ENCODE measurements at regions of chr20 and their contacts with region 1.

Region 1: DNA sequence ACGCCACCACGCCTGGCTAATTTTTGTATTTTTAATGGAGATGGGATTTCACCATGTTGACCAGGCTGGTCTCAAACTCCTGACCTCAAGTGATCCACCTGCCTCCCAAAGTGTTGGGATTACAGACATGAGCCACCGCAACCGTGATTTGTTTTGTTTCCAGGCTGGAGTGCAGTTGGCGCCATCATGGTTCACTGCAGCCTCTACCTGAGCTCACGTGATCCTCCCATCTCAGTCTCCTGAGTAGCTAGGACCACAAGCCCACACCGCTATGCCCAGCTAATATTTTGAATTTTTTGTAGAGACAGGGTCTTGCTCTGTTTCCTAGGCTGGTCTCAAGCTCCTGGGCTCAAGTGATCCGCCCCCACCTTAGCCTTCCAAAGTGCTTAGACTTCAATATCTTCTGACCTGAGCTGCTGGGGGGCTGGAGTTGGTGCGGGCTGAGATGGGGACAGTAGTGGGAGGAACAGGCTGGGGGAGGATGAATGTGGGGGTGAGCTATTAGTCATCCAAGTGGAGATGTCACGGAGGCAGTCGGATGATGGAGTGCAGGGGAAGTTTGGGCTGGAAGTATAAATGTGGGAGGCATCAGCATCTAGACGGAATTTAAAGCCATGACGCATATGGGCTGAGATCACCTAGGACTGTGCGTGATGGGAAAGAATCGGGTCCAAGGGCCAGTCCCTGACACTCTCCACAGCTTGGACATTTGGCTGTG is 23.1 kb upstream of the ZMYND8 start:
- DNase-seq: no peak
- ATAC-seq: no peak
- H3K4me3 ChIP-seq: no peak overlapping the region
- H3K4me3 Mint-ChIP-seq: no peak overlapping the region
- H3K27ac ChIP-seq: no peak overlapping the region
- H3K27ac Mint-ChIP-seq: no peak overlapping the region
- H3K4me1 ChIP-seq: peaks cover 7 to 10% of the 10 kb centered on the region in 2 donors
- H3K4me1 Mint-ChIP-seq: peaks cover 10% of the 10 kb centered on the region
- H3K27me3 ChIP-seq: no peaks in the 10 kb centered on the region
- H3K27me3 Mint-ChIP-seq: no peaks in the 10 kb centered on the region
- CTCF ChIP-seq: no peak

Region 2: DNA sequence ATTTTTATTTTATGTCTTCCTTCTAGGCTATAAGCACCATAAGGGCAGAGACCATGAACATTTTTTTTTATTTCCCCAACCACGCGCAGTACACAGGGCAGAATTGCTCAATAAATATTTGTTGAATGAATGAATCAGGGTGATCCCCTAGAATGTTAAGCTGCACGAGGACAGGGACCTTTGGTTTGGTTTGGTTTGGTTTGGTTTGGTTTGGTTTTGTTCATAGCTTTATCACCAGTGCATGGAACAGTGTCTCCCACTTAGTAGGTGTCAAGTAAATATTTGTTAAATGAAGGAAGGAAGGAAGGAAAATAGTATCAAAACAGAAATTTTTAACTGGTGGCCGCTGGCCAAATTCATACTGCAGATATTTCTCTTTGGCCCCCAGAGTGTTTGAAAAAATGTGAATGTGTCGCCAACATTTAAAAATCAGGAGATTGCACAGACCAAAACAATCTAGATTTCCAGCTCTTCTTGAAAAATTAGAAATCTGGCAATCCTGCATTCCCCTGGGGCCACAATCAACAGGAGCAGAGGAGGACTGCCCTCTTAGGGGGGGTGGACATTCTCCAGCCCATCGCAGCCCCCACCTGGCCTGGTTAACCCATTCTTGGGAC is 279.7 kb before region 1 on chr20:
- CTCF ChIA-PET with region 1: no interaction called
- POLR2A ChIA-PET with region 1: no interaction called
- intact Hi-C with region 1: no loop called
- DNase-seq: no peak
- ATAC-seq: no peak
- H3K4me3 ChIP-seq: no peak overlapping the region
- H3K4me3 Mint-ChIP-seq: no peak overlapping the region
- H3K27ac ChIP-seq: no peak overlapping the region
- H3K27ac Mint-ChIP-seq: no peak overlapping the region
- H3K4me1 ChIP-seq: no peaks in the 10 kb centered on the region
- H3K4me1 Mint-ChIP-seq: no peaks in the 10 kb centered on the region
- H3K27me3 ChIP-seq: peaks cover 0 to 15% (median 0%) of the 10 kb centered on the region in 4 experiments
- H3K27me3 Mint-ChIP-seq: peaks cover 29% of the 10 kb centered on the region
- CTCF ChIP-seq: no peak

Region 3: GRCh38 chr20:47173596-47174216 is 205.9 kb before region 1 on chr20:
- CTCF ChIA-PET with region 1: no interaction called
- POLR2A ChIA-PET with region 1: no interaction called
- intact Hi-C with region 1: no loop called
- DNase-seq: no peak
- ATAC-seq: no peak
- H3K4me3 ChIP-seq: no peak overlapping the region
- H3K4me3 Mint-ChIP-seq: no peak overlapping the region
- H3K27ac ChIP-seq: no peak overlapping the region
- H3K27ac Mint-ChIP-seq: no peak overlapping the region
- H3K4me1 ChIP-seq: no peaks in the 10 kb centered on the region
- H3K4me1 Mint-ChIP-seq: no peaks in the 10 kb centered on the region
- H3K27me3 ChIP-seq: peaks cover 0 to 5% (median 3%) of the 10 kb centered on the region in 4 experiments
- H3K27me3 Mint-ChIP-seq: peaks cover 19% of the 10 kb centered on the region
- CTCF ChIP-seq: no peak

Region 4: DNA sequence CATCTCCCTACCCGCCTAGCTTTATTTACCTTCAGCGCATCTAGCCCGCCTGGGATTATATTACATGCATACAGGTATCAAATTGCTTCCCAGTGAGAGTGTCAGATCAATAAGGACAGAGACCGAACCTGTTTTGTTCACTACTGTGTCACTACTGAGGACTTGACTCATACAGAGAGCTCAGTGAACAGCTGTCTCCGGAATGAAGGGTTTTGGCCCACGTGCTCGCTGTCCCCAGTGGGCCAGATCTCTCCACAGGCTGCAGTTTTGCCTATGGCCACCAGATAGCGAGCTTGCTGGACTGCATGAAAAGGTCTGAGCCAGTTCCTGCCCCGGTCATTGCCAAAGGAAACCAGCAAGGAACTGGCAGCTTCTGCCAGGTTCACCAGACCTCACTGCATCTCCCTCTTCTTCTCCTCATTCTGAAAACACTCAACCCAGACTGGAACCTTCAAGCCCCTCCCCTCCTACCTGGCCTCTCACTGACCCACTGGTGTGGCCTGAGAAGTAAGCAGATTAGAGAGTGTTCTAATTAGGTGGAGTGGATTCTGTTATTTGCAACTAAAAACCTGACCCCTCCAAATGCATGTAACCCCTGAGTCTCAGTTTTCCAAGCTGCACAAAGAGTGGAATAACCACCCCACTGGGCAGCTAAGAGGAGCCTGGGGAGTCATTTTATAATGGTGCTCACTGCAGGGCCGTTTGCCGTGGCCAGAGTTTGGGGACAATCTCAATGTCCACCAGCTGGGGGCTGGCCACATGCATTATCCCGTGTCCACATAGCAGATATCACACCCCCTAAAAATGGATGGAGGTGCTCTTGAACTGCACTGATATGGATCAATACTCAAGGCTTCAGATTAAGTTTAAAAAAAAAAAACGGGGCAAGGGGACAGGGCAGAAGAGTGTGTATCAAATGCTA is 173.8 kb before region 1 on chr20:
- CTCF ChIA-PET with region 1: interaction called, 11 read pairs
- POLR2A ChIA-PET with region 1: no interaction called
- intact Hi-C with region 1: no loop called
- DNase-seq: no peak
- ATAC-seq: peak; percentile 68
- H3K4me3 ChIP-seq: no peak overlapping the region
- H3K4me3 Mint-ChIP-seq: no peak overlapping the region
- H3K27ac ChIP-seq: no peak overlapping the region
- H3K27ac Mint-ChIP-seq: no peak overlapping the region
- H3K4me1 ChIP-seq: no peaks in the 10 kb centered on the region
- H3K4me1 Mint-ChIP-seq: peaks cover 5% of the 10 kb centered on the region
- H3K27me3 ChIP-seq: no peaks in the 10 kb centered on the region
- H3K27me3 Mint-ChIP-seq: no peaks in the 10 kb centered on the region
- CTCF ChIP-seq: no peak

Region 5: GRCh38 chr20:47296950-47297349 is 82.6 kb before region 1 on chr20:
- CTCF ChIA-PET with region 1: interaction called, 46 read pairs
- POLR2A ChIA-PET with region 1: no interaction called
- intact Hi-C with region 1: loop called (anchors 1 kb)
- DNase-seq: peak; percentile 24
- ATAC-seq: peak; percentile 31
- H3K4me3 ChIP-seq: no peak overlapping the region
- H3K4me3 Mint-ChIP-seq: no peak overlapping the region
- H3K27ac ChIP-seq: no peak overlapping the region
- H3K27ac Mint-ChIP-seq: no peak overlapping the region
- H3K4me1 ChIP-seq: no peaks in the 10 kb centered on the region
- H3K4me1 Mint-ChIP-seq: no peaks in the 10 kb centered on the region
- H3K27me3 ChIP-seq: no peaks in the 10 kb centered on the region
- H3K27me3 Mint-ChIP-seq: no peaks in the 10 kb centered on the region
- CTCF ChIP-seq: peak; percentile 30

Region 6: DNA sequence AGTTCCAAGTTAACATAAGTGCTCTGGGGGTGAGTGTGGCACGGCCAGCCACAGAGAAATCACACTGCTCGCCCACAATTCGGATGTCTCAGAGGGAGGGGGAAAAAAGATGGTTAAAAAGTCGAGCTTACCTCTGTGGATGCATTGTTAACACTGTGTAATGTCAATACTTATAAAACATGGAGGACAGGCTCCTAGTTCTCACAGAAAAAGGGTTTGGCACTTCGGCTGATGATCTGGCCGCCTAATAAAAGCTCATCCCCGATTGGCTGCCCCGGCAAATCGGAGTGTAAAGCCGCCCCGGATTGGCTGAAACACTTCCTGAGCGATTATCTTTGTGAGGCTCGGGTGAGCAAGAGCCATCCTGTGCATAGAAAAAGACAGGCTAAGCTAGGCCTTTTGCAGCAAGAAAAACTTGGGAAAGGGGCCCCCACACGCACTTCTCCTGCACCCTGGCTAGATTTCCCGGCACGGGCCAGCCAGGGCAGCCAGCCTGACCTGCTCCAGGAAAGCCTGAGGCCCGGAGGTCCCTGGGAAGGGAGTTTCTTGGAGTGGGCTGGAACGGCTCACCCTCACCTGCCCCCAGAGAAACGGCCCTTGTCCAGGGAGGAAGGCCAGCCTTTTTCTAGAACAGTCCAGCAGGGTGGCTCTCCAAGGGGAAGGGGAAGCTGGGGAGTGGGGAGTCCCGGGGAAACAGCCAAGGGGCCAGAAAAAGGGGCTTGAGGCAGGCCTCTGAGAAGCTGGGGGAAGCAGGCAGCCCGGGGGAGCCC is 22.9 kb before region 1 on chr20 and contains the start of gene ZMYND8:
- CTCF ChIA-PET with region 1: interaction called, 43 read pairs
- POLR2A ChIA-PET with region 1: interaction called, 4 read pairs
- intact Hi-C with region 1: loop called (anchors 2 kb)
- DNase-seq: peak; percentile 98
- ATAC-seq: peak; percentile 81
- H3K4me3 ChIP-seq: peak within 1 kb of the TSS; percentile 42 to 68 (median 56)
- H3K4me3 Mint-ChIP-seq: peak within 1 kb of the TSS; percentile 92
- H3K27ac ChIP-seq: peak within 1 kb of the TSS; percentile 90
- H3K27ac Mint-ChIP-seq: peak within 1 kb of the TSS; percentile 99
- H3K4me1 ChIP-seq: peaks cover 89 to 97% of the 10 kb centered on the region in 2 donors
- H3K4me1 Mint-ChIP-seq: peaks cover 57% of the 10 kb centered on the region
- H3K27me3 ChIP-seq: no peaks in the 10 kb centered on the region
- H3K27me3 Mint-ChIP-seq: no peaks in the 10 kb centered on the region
- CTCF ChIP-seq: no peak
- total RNA-seq, gene ZMYND8: 67.2 and 71.6 TPM in 2 replicates

Region 7: GRCh38 chr20:47428164-47428563 is 48.6 kb after region 1 on chr20:
- CTCF ChIA-PET with region 1: interaction called, 10 read pairs
- POLR2A ChIA-PET with region 1: no interaction called
- intact Hi-C with region 1: no loop called
- DNase-seq: no peak
- ATAC-seq: no peak
- H3K4me3 ChIP-seq: no peak overlapping the region
- H3K4me3 Mint-ChIP-seq: no peak overlapping the region
- H3K27ac ChIP-seq: no peak overlapping the region
- H3K27ac Mint-ChIP-seq: peak overlapping the region; percentile 62
- H3K4me1 ChIP-seq: peaks cover 17 to 19% of the 10 kb centered on the region in 2 donors
- H3K4me1 Mint-ChIP-seq: peaks cover 19% of the 10 kb centered on the region
- H3K27me3 ChIP-seq: no peaks in the 10 kb centered on the region
- H3K27me3 Mint-ChIP-seq: no peaks in the 10 kb centered on the region
- CTCF ChIP-seq: no peak

Region 8: DNA sequence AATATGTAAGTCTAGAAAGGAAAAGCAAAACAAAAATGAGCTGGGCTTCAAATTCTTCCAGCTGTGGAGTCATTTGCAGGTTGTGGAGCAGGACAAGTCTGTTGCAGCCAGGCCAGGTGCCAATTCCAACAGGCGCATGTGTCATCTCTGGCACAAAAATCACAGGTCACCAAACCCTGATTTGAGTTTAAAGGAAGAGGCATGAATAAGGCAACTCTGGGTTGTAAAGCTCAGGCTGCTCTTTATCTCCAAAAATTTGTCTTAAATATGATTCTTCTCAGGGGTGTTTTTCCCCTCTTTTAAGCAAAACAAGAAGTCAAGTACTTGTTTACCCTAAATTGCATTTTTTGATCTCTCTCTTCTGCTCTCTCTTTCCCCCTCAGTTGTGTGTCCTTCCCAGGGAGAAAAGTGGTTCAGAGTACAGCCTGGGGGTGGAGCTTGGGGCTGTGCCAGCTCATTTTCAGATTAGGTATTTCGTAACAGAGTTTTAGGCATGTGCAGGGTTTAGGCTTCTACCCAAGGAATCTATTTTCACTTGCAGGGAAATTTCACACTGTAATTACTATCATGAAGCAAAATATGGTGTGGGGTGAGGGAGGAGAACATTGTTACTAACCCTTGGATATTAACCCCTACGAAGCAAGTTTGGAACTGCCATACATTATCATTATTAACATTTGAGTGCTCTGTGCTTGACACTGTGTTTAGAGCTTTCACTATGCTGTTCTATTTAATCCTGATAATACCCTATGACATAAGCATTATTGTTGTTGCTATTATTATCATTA is 113.8 kb after region 1 on chr20:
- CTCF ChIA-PET with region 1: interaction called, 34 read pairs
- POLR2A ChIA-PET with region 1: interaction called, 3 read pairs
- intact Hi-C with region 1: no loop called
- DNase-seq: peak; percentile 44
- ATAC-seq: peak; percentile 42
- H3K4me3 ChIP-seq: peak overlapping the region in 1 of 5 experiments; percentile 29
- H3K4me3 Mint-ChIP-seq: peak overlapping the region; percentile 42
- H3K27ac ChIP-seq: peak overlapping the region in 1 of 2 donors; percentile 53
- H3K27ac Mint-ChIP-seq: peak overlapping the region; percentile 76
- H3K4me1 ChIP-seq: peaks cover 37 to 49% of the 10 kb centered on the region in 2 donors
- H3K4me1 Mint-ChIP-seq: peaks cover 47% of the 10 kb centered on the region
- H3K27me3 ChIP-seq: no peaks in the 10 kb centered on the region
- H3K27me3 Mint-ChIP-seq: no peaks in the 10 kb centered on the region
- CTCF ChIP-seq: no peak

Region 9: DNA sequence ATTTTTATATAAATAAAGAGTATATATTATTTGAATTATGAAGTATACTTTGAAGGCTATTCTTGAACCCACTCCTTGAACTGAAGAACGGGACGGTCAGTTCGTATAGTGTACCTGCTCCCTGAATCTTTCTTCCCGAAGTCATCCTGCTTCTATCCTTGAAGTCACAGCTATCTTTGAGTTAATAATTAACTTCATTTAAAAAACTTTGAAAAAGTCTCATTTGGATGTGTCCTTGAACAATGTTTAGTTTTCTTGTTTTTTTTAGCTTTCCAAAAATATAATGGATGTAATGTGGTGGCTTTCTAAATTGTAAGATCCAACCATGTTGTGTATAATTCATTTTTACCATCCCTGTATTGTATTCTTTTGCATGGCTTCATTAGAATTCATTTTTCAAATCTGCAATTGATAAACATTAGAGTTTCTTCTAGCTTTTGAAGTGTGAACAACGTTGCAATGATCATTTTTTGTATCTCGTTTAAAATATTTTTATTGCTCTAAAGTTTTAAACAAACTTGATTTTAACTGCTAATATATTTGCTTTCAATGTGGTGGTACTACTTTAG is 216.5 kb after region 1 on chr20:
- CTCF ChIA-PET with region 1: interaction called, 10 read pairs
- POLR2A ChIA-PET with region 1: no interaction called
- intact Hi-C with region 1: no loop called
- DNase-seq: no peak
- ATAC-seq: no peak
- H3K4me3 ChIP-seq: no peak overlapping the region
- H3K4me3 Mint-ChIP-seq: no peak overlapping the region
- H3K27ac ChIP-seq: no peak overlapping the region
- H3K27ac Mint-ChIP-seq: no peak overlapping the region
- H3K4me1 ChIP-seq: peaks cover 0 to 2% of the 10 kb centered on the region in 2 donors
- H3K4me1 Mint-ChIP-seq: peaks cover 42% of the 10 kb centered on the region
- H3K27me3 ChIP-seq: no peaks in the 10 kb centered on the region
- H3K27me3 Mint-ChIP-seq: no peaks in the 10 kb centered on the region
- CTCF ChIP-seq: no peak

Region 10: GRCh38 chr20:47691625-47692024 is 312.0 kb after region 1 on chr20:
- CTCF ChIA-PET with region 1: no interaction called
- POLR2A ChIA-PET with region 1: no interaction called
- intact Hi-C with region 1: no loop called
- DNase-seq: peak; percentile 42
- ATAC-seq: no peak
- H3K4me3 ChIP-seq: no peak overlapping the region
- H3K4me3 Mint-ChIP-seq: no peak overlapping the region
- H3K27ac ChIP-seq: no peak overlapping the region
- H3K27ac Mint-ChIP-seq: no peak overlapping the region
- H3K4me1 ChIP-seq: no peaks in the 10 kb centered on the region
- H3K4me1 Mint-ChIP-seq: no peaks in the 10 kb centered on the region
- H3K27me3 ChIP-seq: no peaks in the 10 kb centered on the region
- H3K27me3 Mint-ChIP-seq: peaks cover 4% of the 10 kb centered on the region
- CTCF ChIP-seq: no peak

Measured in B cell (primary cell).